ENCODE measurements at regions of chr9 and their contacts with region 1.

Region 1: DNA sequence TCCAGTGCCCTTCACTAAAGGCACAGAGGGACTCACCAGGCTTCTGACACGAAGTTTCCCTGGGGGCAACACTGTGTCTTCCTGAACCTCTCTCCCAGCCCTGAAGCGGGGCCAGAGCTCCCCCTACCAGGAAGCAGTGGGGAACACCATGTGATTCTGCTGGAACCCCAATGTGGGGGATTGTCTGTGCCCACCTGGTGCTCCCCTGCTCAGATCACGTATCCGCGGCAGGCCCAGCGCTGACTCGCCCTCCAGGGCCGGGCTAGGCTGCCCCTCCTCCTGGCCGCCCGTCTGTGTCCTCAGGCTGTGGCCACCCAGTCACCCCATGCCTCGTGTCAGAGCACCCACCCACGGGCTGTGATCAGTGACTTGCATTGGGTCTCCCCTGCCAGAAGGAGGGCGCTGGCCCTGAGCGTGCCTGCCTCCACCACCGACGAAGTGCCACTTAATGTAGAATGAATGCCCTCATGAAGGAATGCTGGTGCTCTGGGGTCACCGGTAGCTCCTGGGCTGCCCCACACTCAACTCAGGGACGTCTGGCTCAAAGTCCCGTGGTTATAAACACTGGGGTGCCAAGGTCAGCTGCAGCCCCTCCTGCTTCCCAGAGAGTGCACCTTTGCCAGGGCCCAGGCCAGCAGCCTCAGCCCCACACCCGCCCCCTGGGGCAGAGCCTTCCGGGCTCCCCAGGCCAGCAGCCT is 22.1 kb downstream of the SARDH start:
- DNase-seq: peak in 4 of 5 donors; percentile 29 to 61 (median 48)
- ATAC-seq: peak in 3 of 4 donors; percentile 2 to 44 (median 7)
- H3K4me3 ChIP-seq: no peak overlapping the region
- H3K27ac ChIP-seq: peak overlapping the region in 8 of 12 donors; percentile 13 to 76 (median 54)
- H3K4me1 ChIP-seq: peaks cover 0 to 31% (median 10%) of the 10 kb centered on the region in 12 donors
- H3K27me3 ChIP-seq: peaks cover 0 to 19% (median 0%) of the 10 kb centered on the region in 9 donors
- CTCF ChIP-seq: peak; percentile 22 to 59 (median 46)
- POLR2A ChIP-seq: no peak

Region 2: DNA sequence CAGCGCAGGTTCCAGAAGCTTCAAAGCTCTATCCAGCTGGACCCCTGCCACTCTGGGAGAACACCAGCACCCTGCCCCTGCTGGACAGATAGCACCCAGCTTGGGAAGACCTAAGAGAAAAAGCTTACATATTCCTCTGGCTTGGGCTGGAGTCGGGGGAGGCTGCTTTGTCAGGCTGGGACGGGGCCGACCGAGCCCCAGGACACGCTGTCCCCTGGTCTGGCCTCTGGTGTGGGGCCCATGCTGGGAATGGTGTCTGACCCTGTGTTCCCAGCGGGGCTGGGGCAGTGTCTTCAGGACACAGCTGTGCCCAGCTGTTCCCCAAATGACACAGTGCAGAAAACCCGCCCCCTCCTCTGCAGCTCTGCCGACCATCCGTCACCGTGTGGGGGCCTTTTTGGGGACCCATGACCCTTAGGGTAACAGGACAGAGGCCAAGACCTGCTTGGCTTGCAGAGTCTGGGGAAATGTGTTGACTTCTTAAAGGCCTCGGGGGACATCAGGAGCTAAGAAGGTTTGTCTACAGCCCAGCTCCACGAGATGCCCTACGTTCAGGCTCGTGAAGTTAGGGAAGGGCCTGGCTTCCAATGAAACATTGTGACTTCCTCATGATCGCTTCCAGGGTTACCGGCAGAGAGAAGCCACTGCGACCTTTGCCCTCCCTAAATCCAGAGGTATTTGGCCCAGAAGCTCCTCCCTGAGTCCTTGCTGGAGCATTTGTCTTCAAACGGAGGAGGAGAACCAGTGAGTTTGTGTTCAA is 216.7 kb before region 1 on chr9:
- intact Hi-C with region 1: no loop called
- DNase-seq: peak in 3 of 5 donors; percentile 65 to 72 (median 68)
- ATAC-seq: peak; percentile 39 to 82 (median 58)
- H3K4me3 ChIP-seq: no peak overlapping the region
- H3K27ac ChIP-seq: no peak overlapping the region
- H3K4me1 ChIP-seq: peaks cover 0 to 16% (median 6%) of the 10 kb centered on the region in 12 donors
- H3K27me3 ChIP-seq: peaks cover 0 to 2% (median 0%) of the 10 kb centered on the region in 9 donors
- CTCF ChIP-seq: no peak
- POLR2A ChIP-seq: no peak

Region 3: DNA sequence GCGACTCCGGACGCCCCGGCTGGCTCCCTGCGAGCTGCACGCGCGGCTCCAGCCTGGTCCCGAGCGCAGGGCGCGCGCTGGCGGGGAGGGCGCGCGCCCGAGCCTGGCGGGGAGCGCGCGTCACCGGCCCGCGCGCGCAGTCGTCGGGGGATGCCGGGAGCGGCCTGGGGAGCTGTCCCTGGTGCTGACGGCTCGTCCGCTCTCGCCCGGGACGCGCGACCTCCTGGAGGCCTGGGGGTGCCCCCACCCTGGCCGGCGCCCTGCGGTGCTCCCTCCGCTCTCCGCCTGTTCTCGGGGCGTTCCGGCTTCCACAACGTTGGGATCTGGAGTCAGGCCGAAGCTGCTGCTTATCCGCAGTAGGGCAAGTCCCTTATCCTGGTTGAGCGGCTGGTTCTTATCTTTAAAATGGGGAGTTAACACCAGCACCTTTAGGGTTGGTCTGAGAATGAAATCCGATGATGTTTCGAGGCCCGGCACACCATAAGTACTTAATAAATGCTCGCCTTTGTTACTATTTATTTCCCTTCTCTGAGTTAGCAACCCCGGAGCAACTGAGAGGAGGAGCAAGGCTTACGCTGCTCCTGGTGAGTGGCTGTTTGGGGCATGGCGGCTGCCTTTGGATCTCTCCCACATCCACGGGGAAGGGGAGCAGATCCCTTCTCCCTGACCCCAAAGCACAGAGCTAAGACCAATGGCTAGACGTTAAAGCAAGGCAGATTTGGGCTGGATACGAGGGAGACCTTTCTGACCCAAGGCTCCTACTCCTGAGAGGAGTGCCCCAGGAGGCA is 106.5 kb before region 1 on chr9 and contains the start of gene FAM163B:
- intact Hi-C with region 1: loop called in 1 of 10 experiments (anchors 10 kb)
- DNase-seq: peak in 3 of 5 donors; percentile 47 to 53 (median 47)
- ATAC-seq: peak in 3 of 4 donors; percentile 75 to 91 (median 84)
- H3K4me3 ChIP-seq: peak within 1 kb of the TSS in 4 of 12 donors; percentile 16 to 42 (median 28)
- H3K27ac ChIP-seq: no peak within 1 kb of the TSS
- H3K4me1 ChIP-seq: peaks cover 0 to 9% (median 0%) of the 10 kb centered on the region in 12 donors
- H3K27me3 ChIP-seq: peaks cover 6 to 87% (median 45%) of the 10 kb centered on the region in 9 donors
- CTCF ChIP-seq: no peak
- POLR2A ChIP-seq: no peak
- total RNA-seq, gene FAM163B: not detected

Region 4: DNA sequence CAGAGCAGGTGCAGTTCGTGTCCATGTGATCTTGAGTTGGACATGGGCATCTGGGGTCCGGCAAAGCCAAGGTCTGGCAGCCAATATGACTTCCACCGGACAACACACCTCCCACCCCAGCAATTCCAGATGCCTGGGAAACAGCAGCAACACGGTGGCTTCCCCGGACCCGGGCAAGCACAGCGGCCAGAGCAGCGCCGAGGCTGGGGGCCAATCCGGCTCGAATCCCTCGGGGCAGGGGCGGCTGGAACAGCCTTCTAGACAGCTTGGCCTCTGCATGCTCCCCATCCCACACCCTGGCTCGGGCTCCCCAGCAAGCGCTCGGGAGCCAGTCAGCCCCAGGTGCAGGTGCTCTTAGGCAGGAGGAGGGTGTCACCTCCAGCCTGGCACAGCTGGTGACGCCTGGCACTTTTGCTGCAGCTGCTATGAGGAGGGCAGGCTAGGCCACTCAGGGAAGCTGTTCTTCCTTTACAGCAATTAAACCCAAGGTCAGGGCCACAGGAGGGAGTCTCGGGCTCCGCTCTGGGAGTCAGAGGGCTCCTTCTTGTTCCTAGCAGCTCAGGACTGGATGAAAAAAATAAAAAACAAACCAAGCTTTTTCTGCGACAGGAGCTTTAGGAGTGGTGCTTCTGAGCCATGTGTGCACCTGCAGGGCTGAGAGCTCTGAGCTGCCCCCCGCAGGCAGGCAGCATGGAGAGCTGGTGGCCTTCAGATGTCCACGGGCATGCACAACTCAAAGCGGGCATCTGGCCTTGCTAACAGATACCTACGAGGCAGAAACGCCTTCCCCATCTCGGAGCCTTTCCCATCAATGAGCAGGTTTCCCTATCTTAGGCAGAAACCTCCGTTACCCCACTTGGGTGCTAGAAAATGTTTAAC is 51.6 kb before region 1 on chr9:
- intact Hi-C with region 1: loop called in 1 of 10 experiments (anchors 10 kb)
- DNase-seq: no peak
- ATAC-seq: no peak
- H3K4me3 ChIP-seq: no peak overlapping the region
- H3K27ac ChIP-seq: no peak overlapping the region
- H3K4me1 ChIP-seq: peaks cover 0 to 10% (median 0%) of the 10 kb centered on the region in 12 donors
- H3K27me3 ChIP-seq: peaks cover 0 to 28% (median 6%) of the 10 kb centered on the region in 9 donors
- CTCF ChIP-seq: no peak
- POLR2A ChIP-seq: no peak

Region 5: GRCh38 chr9:133683586-133684120 is 32.4 kb before region 1 on chr9:
- intact Hi-C with region 1: loop called in 1 of 10 experiments (anchors 1 kb)
- DNase-seq: peak; percentile 68 to 89 (median 85)
- ATAC-seq: peak; percentile 24 to 84 (median 72)
- H3K4me3 ChIP-seq: peak overlapping the region in 2 of 12 donors; percentile 9 to 17
- H3K27ac ChIP-seq: peak overlapping the region; percentile 18 to 84 (median 62)
- H3K4me1 ChIP-seq: peaks cover 0 to 50% (median 33%) of the 10 kb centered on the region in 12 donors
- H3K27me3 ChIP-seq: no peaks in the 10 kb centered on the region
- CTCF ChIP-seq: no peak
- POLR2A ChIP-seq: no peak

Measured in heart left ventricle (tissue), 16 donors.